ENCODE measurements at regions of chr12 and their contacts with region 1.

Region 1: DNA sequence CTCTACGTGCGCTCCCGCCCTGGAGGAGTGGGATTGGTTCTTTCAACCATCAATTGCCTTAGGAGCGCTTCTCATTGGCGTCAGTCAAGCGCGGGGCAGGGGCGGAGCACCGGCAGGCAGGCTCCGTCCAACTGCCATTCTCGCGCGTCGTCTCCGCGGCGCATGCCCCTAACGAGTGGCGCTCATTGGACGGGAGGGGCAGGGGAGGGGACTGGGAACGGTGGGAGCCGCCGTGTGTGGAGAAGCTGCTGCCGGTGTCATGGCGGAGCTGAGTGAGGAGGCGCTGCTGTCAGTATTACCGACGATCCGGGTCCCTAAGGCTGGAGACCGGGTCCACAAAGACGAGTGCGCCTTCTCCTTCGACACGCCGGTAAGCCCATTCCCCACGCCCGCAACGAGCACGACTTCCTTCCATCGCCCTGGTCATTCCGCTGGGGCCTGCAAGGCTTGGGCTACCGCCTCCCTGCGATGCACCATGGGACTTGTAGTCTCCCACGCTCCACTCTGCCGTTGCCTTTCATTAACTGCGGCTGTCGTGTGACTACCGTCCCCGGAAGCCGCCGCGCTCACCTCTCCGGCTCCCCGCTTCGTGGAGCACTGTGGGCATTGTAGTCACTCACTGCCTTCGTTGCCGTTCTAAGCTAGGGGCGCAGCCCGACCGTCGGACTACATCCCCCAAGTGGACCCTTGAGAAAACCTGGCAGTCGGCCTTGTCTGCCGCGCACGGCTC is at the start of gene USP5:
- DNase-seq: peak; percentile 99
- H3K4me3 Mint-ChIP-seq: peak within 1 kb of the TSS; percentile 85
- H3K27ac Mint-ChIP-seq: peak within 1 kb of the TSS; percentile 100
- H3K4me1 Mint-ChIP-seq: peaks cover 50% of the 10 kb centered on the region
- H3K27me3 Mint-ChIP-seq: no peaks in the 10 kb centered on the region
- total RNA-seq, gene USP5: 91.4 to 109 TPM

Region 2: GRCh38 chr12:6723607-6724396 is 128.3 kb before region 1 on chr12 and contains the start of gene COPS7A:
- CTCF ChIA-PET with region 1: interaction called, 10 read pairs
- POLR2A ChIA-PET with region 1: interaction called, 41 read pairs
- DNase-seq: peak; percentile 99
- H3K4me3 Mint-ChIP-seq: peak within 1 kb of the TSS; percentile 84
- H3K27ac Mint-ChIP-seq: peak within 1 kb of the TSS; percentile 92
- H3K4me1 Mint-ChIP-seq: peaks cover 22% of the 10 kb centered on the region
- H3K27me3 Mint-ChIP-seq: no peaks in the 10 kb centered on the region
- total RNA-seq, gene COPS7A: 28.4 to 29.0 TPM

Region 3: GRCh38 chr12:6792522-6793201 is 59.4 kb before region 1 on chr12:
- CTCF ChIA-PET with region 1: no interaction called
- POLR2A ChIA-PET with region 1: interaction called, 60 read pairs
- DNase-seq: peak; percentile 70
- H3K4me3 Mint-ChIP-seq: peak overlapping the region; percentile 93
- H3K27ac Mint-ChIP-seq: peak overlapping the region; percentile 90
- H3K4me1 Mint-ChIP-seq: peaks cover 51% of the 10 kb centered on the region
- H3K27me3 Mint-ChIP-seq: no peaks in the 10 kb centered on the region

Region 4: DNA sequence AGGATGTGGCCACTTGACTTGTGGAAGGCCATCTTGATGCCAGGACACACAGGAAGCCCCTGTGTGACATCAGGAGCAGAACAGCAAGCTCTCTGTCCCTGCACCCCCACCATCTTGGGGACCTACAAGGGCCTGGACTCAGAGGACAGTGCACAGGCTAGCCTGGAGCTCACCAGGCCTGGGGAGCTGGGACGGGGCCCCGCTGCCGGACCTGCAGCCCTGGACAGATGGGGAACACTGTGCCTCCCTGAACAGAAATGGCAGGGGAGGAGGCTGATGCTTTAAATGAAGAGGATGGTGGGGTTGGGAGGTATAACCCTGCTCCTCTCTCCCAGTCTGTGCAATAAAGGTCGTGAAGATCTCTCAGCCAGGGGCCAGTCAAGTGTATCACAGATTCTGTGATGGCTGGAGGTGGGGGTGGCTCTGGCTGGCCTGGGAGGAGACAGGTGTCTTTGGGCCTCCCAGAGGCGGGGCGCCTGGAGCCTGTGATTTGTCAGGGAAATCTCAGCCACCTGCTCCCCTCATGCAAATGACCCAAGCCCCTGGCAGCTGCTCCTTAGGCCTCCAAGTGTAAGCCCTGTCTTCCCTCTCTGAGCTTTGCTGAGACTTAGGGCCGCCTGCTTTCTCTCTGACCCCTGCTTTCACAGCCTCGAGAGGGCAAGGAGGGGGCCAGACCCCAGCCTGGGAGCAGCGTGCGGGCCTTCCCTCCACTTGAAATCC is 12.4 kb before region 1 on chr12:
- CTCF ChIA-PET with region 1: interaction called, 35 read pairs
- POLR2A ChIA-PET with region 1: interaction called, 53 read pairs
- DNase-seq: no peak
- H3K4me3 Mint-ChIP-seq: no peak overlapping the region
- H3K27ac Mint-ChIP-seq: no peak overlapping the region
- H3K4me1 Mint-ChIP-seq: peaks cover 7% of the 10 kb centered on the region
- H3K27me3 Mint-ChIP-seq: no peaks in the 10 kb centered on the region

Region 5: DNA sequence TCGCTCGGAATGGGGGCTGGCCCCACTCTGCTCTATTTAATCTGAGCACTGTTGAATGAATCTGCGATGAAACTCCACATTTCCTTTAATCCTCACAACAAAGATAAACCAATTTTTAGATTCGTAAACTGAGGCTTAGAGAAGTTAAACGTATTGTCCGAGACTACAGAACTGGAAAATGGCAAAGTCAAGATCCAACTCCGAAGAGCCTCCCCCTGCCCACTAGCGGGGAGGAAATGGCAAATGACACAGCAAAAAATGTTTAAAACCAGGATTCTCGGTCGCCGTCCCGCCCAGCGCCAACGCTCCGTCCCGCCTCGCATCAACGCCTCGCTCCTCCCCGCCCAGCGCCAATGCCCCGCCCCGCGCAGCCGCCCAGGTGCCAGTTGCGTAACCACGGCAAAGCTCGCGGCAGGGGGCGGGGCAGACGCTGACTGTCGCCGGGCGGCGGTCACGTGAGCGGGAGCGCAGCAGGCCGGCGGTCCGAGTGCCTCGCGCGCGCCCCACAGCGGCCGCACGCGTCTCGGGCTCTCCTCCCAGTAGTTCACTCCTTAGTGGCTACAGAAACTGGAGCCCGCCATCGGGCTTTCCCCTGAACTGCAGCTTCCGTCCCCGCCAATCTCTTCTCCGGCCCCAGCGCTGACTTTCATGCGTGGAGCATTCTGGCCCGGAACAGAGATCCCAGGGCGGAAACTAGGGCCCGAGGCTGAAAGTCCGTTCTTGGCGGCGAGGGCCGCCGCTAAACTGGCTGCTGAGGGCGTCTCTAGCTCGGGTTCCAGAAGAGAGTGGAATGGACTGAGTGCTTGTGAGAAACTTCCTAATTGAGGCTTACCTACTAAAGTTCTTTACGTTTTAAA is 38.9 kb after region 1 on chr12:
- CTCF ChIA-PET with region 1: interaction called, 23 read pairs
- POLR2A ChIA-PET with region 1: interaction called, 43 read pairs
- DNase-seq: peak; percentile 99
- H3K4me3 Mint-ChIP-seq: peak overlapping the region; percentile 79
- H3K27ac Mint-ChIP-seq: peak overlapping the region; percentile 93
- H3K4me1 Mint-ChIP-seq: peaks cover 38% of the 10 kb centered on the region
- H3K27me3 Mint-ChIP-seq: no peaks in the 10 kb centered on the region

Region 6: DNA sequence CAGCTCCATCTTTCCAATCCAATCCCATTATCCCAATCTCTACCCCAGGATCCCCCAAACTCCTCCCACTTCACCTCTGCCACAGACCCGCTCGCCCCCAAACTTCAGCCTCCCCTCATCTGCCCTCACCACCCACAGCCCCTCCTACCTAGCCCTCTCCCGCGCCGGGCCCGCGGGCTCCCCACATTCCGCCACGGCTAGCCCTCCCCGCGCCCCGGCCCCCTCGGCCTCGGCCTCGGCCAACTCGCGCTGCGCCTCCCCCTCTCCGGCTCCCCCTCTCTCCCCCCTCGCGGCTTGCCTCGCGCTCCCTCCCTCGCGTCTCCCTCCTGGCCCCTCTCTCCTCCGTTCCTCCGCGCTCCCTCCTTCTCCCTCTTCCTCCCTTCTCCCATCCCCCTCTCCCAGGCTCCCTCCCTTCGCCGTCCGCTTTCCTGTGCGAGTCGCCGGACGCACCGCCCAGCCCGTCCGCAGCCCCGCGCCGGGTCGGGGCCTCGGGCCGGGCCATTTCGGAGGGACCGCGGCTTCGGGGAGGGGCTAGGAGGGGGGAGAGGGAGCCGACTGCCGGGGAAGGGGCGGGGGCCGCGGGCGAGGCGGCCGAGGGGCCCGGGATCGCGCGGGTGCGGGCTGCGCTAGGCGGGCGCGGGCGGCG is 75.4 kb after region 1 on chr12 and contains the start of gene ATN1:
- CTCF ChIA-PET with region 1: no interaction called
- POLR2A ChIA-PET with region 1: no interaction called
- DNase-seq: peak; percentile 48
- H3K4me3 Mint-ChIP-seq: peak within 1 kb of the TSS; percentile 90
- H3K27ac Mint-ChIP-seq: peak within 1 kb of the TSS; percentile 78
- H3K4me1 Mint-ChIP-seq: peaks cover 68% of the 10 kb centered on the region
- H3K27me3 Mint-ChIP-seq: no peaks in the 10 kb centered on the region
- total RNA-seq, gene ATN1: 33.9 to 34.6 TPM

Region 7: GRCh38 chr12:6959058-6959804 is 107.1 kb after region 1 on chr12:
- CTCF ChIA-PET with region 1: no interaction called
- POLR2A ChIA-PET with region 1: interaction called, 12 read pairs
- DNase-seq: peak; percentile 78
- H3K4me3 Mint-ChIP-seq: peak overlapping the region; percentile 88
- H3K27ac Mint-ChIP-seq: peak overlapping the region; percentile 99
- H3K4me1 Mint-ChIP-seq: peaks cover 92% of the 10 kb centered on the region
- H3K27me3 Mint-ChIP-seq: no peaks in the 10 kb centered on the region

Region 8: DNA sequence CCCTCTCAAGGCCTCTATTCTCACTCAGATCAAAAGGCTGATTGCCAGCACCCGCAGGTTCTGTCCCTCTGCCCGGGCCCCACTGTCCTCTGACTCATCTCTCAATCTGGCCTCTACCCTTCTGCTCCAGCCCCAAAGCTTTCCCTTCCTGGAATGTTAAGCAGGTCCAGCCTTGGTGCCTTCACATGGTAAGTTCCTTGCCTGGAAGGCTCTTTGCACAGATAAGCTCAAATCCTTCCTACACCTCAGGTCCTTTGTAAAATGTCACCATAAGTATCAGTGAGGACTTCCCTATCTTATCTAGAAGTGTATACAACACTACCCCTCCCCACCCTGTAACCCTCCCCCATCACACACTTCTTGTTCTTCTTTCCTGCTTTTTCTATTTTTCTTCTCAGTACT is 144.0 kb after region 1 on chr12:
- CTCF ChIA-PET with region 1: no interaction called
- POLR2A ChIA-PET with region 1: no interaction called
- DNase-seq: no peak
- H3K4me3 Mint-ChIP-seq: no peak overlapping the region
- H3K27ac Mint-ChIP-seq: no peak overlapping the region
- H3K4me1 Mint-ChIP-seq: peaks cover 3% of the 10 kb centered on the region
- H3K27me3 Mint-ChIP-seq: no peaks in the 10 kb centered on the region